ENCODE measurements at regions of chr13 and their contacts with region 1.

Region 1: GRCh38 chr13:99200432-99201167 is at the start of gene UBAC2:
- DNase-seq: peak; percentile 97
- ATAC-seq: peak; percentile 97
- total RNA-seq, gene UBAC2: 40.2 to 43.0 TPM

Region 2: GRCh38 chr13:99258210-99258860 is 57.7 kb after region 1 on chr13 and contains the start of gene GPR18:
- intact Hi-C with region 1: loop called (anchors 10 kb)
- DNase-seq: no peak
- ATAC-seq: peak in 1 of 2 donors; percentile 30
- total RNA-seq, gene GPR18: not detected

Region 3: DNA sequence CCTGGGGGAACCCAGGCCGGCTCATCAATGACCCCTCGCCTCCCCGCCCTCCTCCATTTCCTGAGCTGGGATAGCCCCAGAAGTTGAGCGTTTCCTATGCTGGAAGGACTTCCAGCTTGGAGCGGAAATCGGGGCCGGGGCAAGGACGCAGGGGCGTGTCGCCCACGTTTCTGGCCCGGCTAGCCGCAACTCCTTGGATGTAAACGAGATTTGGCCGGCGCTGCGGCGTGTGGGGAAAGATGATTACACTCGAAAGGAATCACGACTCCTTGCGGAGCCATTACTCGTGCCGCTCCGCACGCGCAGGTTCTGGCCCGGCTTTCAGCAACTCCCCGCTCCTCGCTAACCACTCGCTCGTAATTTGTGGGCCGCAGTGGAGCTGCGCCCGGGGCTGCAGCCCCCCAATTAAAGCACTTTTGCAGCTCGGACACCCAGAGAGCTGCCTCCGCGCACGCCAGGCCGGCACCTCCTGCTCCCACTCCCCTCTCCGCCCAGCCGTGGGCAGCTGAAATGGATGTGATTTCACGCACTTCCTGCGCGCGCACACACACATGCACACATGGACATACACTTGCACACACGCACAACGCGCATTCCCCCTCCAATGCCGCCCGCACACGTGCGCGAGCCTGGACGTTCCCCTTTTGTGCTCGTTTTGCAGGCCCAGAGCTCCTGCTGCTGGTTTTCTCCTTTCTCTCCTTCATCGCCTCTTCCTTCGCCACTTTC is 755.3 kb after region 1 on chr13:
- intact Hi-C with region 1: no loop called
- DNase-seq: peak; percentile 58
- ATAC-seq: peak; percentile 45 to 50

Measured in left cardiac atrium (tissue), 4 donors.